GM12878 (cell line): ENCODE measurements at regions of chr4 and their contacts with region 1.

Region 1: DNA sequence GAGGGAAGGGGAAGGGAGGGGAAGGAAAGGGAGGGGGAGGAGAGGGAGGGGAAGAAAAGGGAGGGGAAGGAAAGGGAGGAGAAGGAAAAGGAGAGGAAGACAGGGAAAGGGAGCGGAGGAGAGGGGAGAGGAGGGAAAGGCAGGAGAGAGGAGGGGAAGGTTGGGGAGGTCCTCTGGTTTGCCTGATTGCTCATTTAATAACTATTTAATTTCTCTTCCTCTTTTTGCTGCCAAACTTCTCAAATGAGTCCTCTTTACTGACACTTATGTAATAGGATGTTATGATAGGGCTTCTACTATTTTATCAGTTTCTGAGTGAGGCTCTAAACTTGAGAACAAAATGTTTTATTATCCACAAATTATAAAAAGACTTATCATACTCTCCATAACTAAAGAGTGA is 35.4 kb upstream of the PPA2 start:
- DNase-seq: peak; percentile 20
- ATAC-seq: peak; percentile 96
- H3K4me3 ChIP-seq: no peak overlapping the region
- H3K27ac ChIP-seq: no peak overlapping the region
- H3K4me1 ChIP-seq: peaks cover 8% of the 10 kb centered on the region; the same call in 1 of the 2 replicates
- H3K27me3 ChIP-seq: no peaks in the 10 kb centered on the region
- CTCF ChIP-seq: no peak
- EP300 ChIP-seq: peak; percentile 18 to 78; a peak in 2 of 4 replicates
- POLR2A ChIP-seq: no peak
- RAD21 ChIP-seq: no peak

Region 2: GRCh38 chr4:106194801-106195200 is 685.5 kb after region 1 on chr4:
- CTCF ChIA-PET with region 1: no interaction called
- POLR2A ChIA-PET with region 1: no interaction called
- RAD21 ChIA-PET with region 1: no interaction called
- SMC1A ChIA-PET with region 1: no interaction called
- in situ Hi-C with region 1: no loop called
- intact Hi-C with region 1: loop called (anchors 10 kb)
- DNase-seq: no peak
- ATAC-seq: no peak
- H3K4me3 ChIP-seq: no peak overlapping the region
- H3K27ac ChIP-seq: no peak overlapping the region
- H3K4me1 ChIP-seq: no peaks in the 10 kb centered on the region
- H3K27me3 ChIP-seq: no peaks in the 10 kb centered on the region
- CTCF ChIP-seq: no peak
- EP300 ChIP-seq: no peak
- POLR2A ChIP-seq: no peak
- RAD21 ChIP-seq: no peak